Mucosa of descending colon (tissue), 3 donors: ENCODE measurements at regions of chrX and their contacts with region 1.

Region 1: GRCh38 chrX:107776649-107777535 is 641 bp upstream of the NCBP2L start:
- DNase-seq: peak; percentile 61 to 82 (median 69)
- ATAC-seq: peak; percentile 80
- H3K4me3 ChIP-seq: no peak overlapping the region
- H3K4me1 ChIP-seq: no peaks in the 10 kb centered on the region
- CTCF ChIP-seq: peak; percentile 31

Region 2: GRCh38 chrX:107324499-107325320 is 452.2 kb before region 1 on chrX:
- intact Hi-C with region 1: no loop called
- DNase-seq: peak; percentile 7 to 52 (median 34)
- ATAC-seq: peak; percentile 60
- H3K4me3 ChIP-seq: no peak overlapping the region
- H3K4me1 ChIP-seq: no peaks in the 10 kb centered on the region
- CTCF ChIP-seq: no peak

Region 3: GRCh38 chrX:107654872-107655761 is 121.8 kb before region 1 on chrX:
- intact Hi-C with region 1: loop called (anchors 5 kb)
- DNase-seq: peak; percentile 47 to 72 (median 66)
- ATAC-seq: peak; percentile 82
- H3K4me3 ChIP-seq: no peak overlapping the region
- H3K4me1 ChIP-seq: no peaks in the 10 kb centered on the region
- CTCF ChIP-seq: peak; percentile 51

Region 4: GRCh38 chrX:107902721-107903120 is 125.8 kb after region 1 on chrX:
- intact Hi-C with region 1: no loop called
- DNase-seq: no peak
- ATAC-seq: no peak
- H3K4me3 ChIP-seq: no peak overlapping the region
- H3K4me1 ChIP-seq: no peaks in the 10 kb centered on the region
- CTCF ChIP-seq: no peak